HEK293 (cell line): ENCODE measurements at regions of chr5 and their contacts with region 1.

Region 1: GRCh38 chr5:38441453-38442246 is 114.8 kb downstream of the LIFR start:
- H3K4me3 ChIP-seq: no peak overlapping the region
- H3K27ac ChIP-seq: no peak overlapping the region
- H3K4me1 ChIP-seq: no peaks in the 10 kb centered on the region
- CTCF ChIP-seq: peak; percentile 97

Region 2: DNA sequence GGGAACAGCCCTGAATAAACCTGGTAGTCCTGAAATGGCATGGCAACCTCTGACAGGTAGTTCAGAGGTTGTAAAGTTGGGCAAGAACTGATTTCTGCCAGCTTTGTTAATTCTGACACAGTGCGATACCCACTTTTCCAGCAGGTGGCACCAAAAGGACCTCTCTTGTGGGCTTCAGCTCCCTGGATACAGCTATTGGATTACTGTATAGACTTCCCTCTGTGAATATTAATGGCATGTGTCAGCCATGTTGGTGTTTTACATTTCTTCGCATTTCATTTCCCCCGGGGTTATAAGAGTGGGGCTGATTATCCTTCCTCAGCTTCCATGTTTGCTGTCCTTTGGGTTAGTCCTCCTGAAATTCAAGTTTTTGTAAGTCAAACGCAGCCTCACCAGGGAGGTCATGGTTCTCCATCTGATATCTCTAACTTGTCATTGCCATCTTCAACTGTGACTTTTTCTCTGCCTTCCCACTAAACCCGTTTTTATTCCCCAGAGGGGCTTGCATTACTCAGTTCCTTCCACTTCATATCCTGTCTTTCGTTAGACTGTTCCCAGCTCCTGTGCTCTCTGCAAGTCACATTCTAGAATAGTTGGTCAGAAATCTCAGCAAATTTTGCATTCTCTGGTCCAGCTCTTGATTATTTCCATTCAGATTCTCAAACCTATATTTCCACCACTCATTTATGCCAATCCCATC is 20.8 kb before region 1 on chr5:
- CTCF ChIA-PET with region 1: interaction called, 90 read pairs
- POLR2A ChIA-PET with region 1: interaction called, 9 read pairs
- H3K4me3 ChIP-seq: no peak overlapping the region
- H3K27ac ChIP-seq: no peak overlapping the region
- H3K4me1 ChIP-seq: peaks cover 14% of the 10 kb centered on the region
- CTCF ChIP-seq: peak; percentile 68

Region 3: GRCh38 chr5:38479315-38479904 is 37.8 kb after region 1 on chr5:
- CTCF ChIA-PET with region 1: interaction called, 22 read pairs
- POLR2A ChIA-PET with region 1: no interaction called
- H3K4me3 ChIP-seq: no peak overlapping the region
- H3K27ac ChIP-seq: no peak overlapping the region
- H3K4me1 ChIP-seq: peaks cover 12% of the 10 kb centered on the region; the same call in 1 of the 2 replicates
- CTCF ChIP-seq: no peak

Region 4: GRCh38 chr5:38556599-38557305 is 115.1 kb after region 1 on chr5 and contains the start of gene LIFR:
- CTCF ChIA-PET with region 1: interaction called, 44 read pairs
- POLR2A ChIA-PET with region 1: interaction called, 3 read pairs
- H3K4me3 ChIP-seq: peak within 1 kb of the TSS; percentile 91
- H3K27ac ChIP-seq: peak within 1 kb of the TSS; percentile 99
- H3K4me1 ChIP-seq: peaks cover 24% of the 10 kb centered on the region
- CTCF ChIP-seq: peak; percentile 69

Region 5: DNA sequence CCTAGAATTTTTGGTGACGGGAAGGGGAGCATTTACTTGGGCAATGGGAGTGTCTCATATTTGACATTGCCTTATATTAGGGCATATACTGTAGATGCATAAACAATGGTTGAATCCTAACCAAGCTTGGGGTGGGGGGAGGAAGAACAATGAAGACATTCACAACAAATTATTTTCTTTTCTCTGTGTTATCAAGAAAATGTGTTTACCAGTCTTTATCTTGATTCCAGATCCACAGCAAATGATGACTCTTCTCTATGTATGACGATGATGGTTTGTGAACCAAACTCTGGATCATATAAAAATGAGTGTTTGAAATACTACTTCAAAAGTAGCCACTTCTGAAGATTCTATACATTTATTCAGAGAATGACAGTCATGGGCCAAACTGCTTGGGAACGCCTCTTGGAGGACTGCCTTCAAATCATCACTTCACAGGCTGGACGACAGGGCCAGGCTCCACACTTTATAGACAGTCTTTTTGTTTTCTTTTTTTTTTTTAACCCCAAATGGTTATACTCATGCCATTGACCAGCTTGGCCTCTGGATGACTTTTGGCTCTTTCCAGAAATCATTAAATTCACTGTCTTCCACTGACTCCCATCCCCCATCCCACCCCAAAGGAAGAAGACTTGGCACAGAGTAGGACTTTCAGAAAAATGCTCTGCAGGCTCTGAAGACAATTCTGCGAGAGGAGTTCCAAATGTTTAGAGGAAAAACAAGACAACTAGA is 238.6 kb after region 1 on chr5:
- CTCF ChIA-PET with region 1: interaction called, 14 read pairs
- POLR2A ChIA-PET with region 1: no interaction called
- H3K4me3 ChIP-seq: no peak overlapping the region
- H3K27ac ChIP-seq: no peak overlapping the region
- H3K4me1 ChIP-seq: no peaks in the 10 kb centered on the region
- CTCF ChIP-seq: no peak

Region 6: DNA sequence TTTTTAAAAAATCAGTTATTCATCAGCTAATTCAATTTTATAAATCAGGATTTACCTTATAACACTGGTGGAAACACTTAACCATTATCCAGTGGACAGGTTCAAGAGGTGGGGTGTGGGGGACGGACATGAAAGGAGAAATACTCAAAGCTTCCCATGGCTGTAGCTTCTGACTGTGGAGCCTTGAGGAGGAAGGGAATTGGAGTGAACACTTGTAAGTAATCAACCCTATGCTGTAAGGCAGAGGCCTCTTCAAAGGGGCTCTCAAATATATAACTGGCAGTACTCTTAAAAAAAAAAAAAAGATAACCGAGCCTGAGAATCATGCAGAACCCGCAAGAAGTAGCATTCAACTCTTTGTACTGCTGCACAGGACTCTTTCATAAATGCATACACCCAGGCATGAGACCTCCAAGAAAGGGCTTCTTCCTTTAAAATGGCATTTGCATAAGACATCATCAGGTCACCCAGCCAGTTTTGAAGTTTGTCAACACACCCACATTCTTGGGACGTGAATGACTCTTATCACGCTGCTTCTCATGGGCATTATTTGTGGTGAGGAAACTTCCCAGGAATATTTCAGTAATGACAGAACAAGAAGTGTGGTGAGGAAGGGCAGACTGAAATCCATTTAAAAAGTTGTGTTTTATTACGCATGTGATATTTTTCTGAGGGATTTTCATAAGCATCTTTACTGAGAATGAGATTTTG is 412.3 kb after region 1 on chr5:
- CTCF ChIA-PET with region 1: no interaction called
- POLR2A ChIA-PET with region 1: no interaction called
- H3K4me3 ChIP-seq: no peak overlapping the region
- H3K27ac ChIP-seq: no peak overlapping the region
- H3K4me1 ChIP-seq: no peaks in the 10 kb centered on the region
- CTCF ChIP-seq: no peak

Region 7: GRCh38 chr5:38922199-38922598 is 480.5 kb after region 1 on chr5:
- CTCF ChIA-PET with region 1: interaction called, 33 read pairs
- POLR2A ChIA-PET with region 1: interaction called, 3 read pairs
- H3K4me3 ChIP-seq: no peak overlapping the region
- H3K27ac ChIP-seq: no peak overlapping the region
- H3K4me1 ChIP-seq: no peaks in the 10 kb centered on the region
- CTCF ChIP-seq: peak; percentile 85